ENCODE measurements at regions of chr12 and their contacts with region 1.

Region 1: GRCh38 chr12:69585189-69586062 is at the start of gene CCT2:
- DNase-seq: peak; percentile 88 to 99
- H3K4me3 ChIP-seq: peak within 1 kb of the TSS; percentile 60 to 97
- H3K27ac ChIP-seq: peak within 1 kb of the TSS; percentile 79 to 86
- H3K4me1 ChIP-seq: peaks cover 6 to 8% of the 10 kb centered on the region in 2 donors
- H3K27me3 ChIP-seq: no peaks in the 10 kb centered on the region
- CTCF ChIP-seq: peak in 2 of 3 experiments; percentile 36 to 44
- total RNA-seq, gene CCT2: 65.0 TPM

Region 2: DNA sequence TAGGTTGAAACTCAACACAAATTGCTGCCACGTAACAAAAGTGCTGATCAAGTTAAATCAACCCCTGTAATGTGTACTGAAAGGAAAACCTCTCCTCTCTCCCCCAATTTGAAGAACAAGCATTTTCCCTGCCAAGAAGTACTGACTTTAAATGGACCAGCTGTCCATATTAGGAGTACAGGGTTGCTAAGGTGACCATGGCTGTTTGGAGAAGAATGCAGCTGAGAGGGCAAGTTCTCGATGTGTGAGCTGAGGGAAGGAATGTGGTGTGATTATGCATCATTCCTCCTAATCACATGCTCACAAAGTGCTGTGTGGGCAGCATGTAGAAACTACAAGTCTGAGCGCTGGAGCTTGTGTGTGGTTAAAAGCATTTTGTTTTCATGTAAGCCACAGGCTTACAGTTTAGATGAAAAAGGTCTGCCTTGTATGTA is 51.0 kb before region 1 on chr12:
- intact Hi-C with region 1: loop called (anchors 1 kb)
- DNase-seq: peak; percentile 25 to 89
- H3K4me3 ChIP-seq: peak overlapping the region in 1 of 2 donors; percentile 29
- H3K27ac ChIP-seq: peak overlapping the region; percentile 47 to 69
- H3K4me1 ChIP-seq: peaks cover 0 to 6% of the 10 kb centered on the region in 2 donors
- H3K27me3 ChIP-seq: no peaks in the 10 kb centered on the region
- CTCF ChIP-seq: no peak

Region 3: GRCh38 chr12:69662764-69663163 is 77.3 kb after region 1 on chr12:
- intact Hi-C with region 1: no loop called
- DNase-seq: no peak
- H3K4me3 ChIP-seq: no peak overlapping the region
- H3K27ac ChIP-seq: no peak overlapping the region
- H3K4me1 ChIP-seq: no peaks in the 10 kb centered on the region
- H3K27me3 ChIP-seq: no peaks in the 10 kb centered on the region
- CTCF ChIP-seq: no peak

Region 4: GRCh38 chr12:69738351-69739286 is 153.2 kb after region 1 on chr12 and contains the start of gene RAB3IP:
- intact Hi-C with region 1: loop called (anchors 2 kb)
- DNase-seq: peak; percentile 35 to 87
- H3K4me3 ChIP-seq: peak within 1 kb of the TSS; percentile 92 to 95
- H3K27ac ChIP-seq: peak within 1 kb of the TSS; percentile 15 to 53
- H3K4me1 ChIP-seq: peaks cover 0 to 7% of the 10 kb centered on the region in 2 donors
- H3K27me3 ChIP-seq: no peaks in the 10 kb centered on the region
- CTCF ChIP-seq: peak; percentile 25 to 63 (median 51)
- total RNA-seq, gene RAB3IP: 17.2 TPM

Measured in ascending aorta (tissue), 2 donors.